HEK293 (cell line): ENCODE measurements at regions of chr9 and their contacts with region 1.

Region 1: GRCh38 chr9:78811622-78812276 is 514.8 kb downstream of the PSAT1 start:
- H3K4me3 ChIP-seq: no peak overlapping the region
- H3K27ac ChIP-seq: no peak overlapping the region
- H3K4me1 ChIP-seq: no peaks in the 10 kb centered on the region
- CTCF ChIP-seq: no peak

Region 2: DNA sequence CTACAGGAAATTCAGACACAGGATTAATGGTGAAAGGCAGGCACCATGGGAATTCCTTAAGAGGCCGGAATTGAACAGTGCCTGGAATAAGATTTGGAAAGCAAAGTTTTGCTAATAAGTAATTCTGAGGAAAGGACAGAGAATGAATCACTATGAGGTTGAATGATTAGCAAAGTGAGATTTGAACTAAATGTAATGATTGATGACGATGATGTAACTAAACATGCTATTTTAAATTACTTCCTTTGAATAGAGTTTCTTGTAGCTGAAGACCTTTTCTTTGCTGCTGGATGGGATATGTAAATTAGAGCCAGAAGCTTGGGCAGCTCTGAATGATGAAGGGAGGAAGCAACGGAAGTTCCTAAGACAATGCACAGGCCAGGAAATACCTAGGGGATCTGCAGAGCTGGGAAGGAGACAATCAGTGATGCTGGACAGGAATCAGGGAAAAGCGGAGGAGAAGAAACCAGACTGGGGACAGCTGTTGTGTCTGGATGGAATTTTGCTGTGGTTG is 32.8 kb before region 1 on chr9:
- CTCF ChIA-PET with region 1: no interaction called
- POLR2A ChIA-PET with region 1: no interaction called
- H3K4me3 ChIP-seq: no peak overlapping the region
- H3K27ac ChIP-seq: no peak overlapping the region
- H3K4me1 ChIP-seq: no peaks in the 10 kb centered on the region
- CTCF ChIP-seq: no peak

Region 3: GRCh38 chr9:79123415-79123814 is 311.7 kb after region 1 on chr9:
- CTCF ChIA-PET with region 1: interaction called, 10 read pairs
- POLR2A ChIA-PET with region 1: no interaction called
- H3K4me3 ChIP-seq: no peak overlapping the region
- H3K27ac ChIP-seq: no peak overlapping the region
- H3K4me1 ChIP-seq: no peaks in the 10 kb centered on the region
- CTCF ChIP-seq: no peak